AG04449 (cell line): ENCODE measurements at regions of chr20 and their contacts with region 1.

Region 1: GRCh38 chr20:63009045-63009961 is 2.5 kb upstream of the BHLHE23 start:
- DNase-seq: no peak
- H3K4me3 ChIP-seq: no peak overlapping the region
- CTCF ChIP-seq: peak; percentile 94

Region 2: GRCh38 chr20:62875419-62876361 is 133.6 kb before region 1 on chr20:
- CTCF ChIA-PET with region 1: interaction called, 27 read pairs
- POLR2A ChIA-PET with region 1: no interaction called
- DNase-seq: no peak
- H3K4me3 ChIP-seq: no peak overlapping the region
- CTCF ChIP-seq: peak; percentile 38

Region 3: DNA sequence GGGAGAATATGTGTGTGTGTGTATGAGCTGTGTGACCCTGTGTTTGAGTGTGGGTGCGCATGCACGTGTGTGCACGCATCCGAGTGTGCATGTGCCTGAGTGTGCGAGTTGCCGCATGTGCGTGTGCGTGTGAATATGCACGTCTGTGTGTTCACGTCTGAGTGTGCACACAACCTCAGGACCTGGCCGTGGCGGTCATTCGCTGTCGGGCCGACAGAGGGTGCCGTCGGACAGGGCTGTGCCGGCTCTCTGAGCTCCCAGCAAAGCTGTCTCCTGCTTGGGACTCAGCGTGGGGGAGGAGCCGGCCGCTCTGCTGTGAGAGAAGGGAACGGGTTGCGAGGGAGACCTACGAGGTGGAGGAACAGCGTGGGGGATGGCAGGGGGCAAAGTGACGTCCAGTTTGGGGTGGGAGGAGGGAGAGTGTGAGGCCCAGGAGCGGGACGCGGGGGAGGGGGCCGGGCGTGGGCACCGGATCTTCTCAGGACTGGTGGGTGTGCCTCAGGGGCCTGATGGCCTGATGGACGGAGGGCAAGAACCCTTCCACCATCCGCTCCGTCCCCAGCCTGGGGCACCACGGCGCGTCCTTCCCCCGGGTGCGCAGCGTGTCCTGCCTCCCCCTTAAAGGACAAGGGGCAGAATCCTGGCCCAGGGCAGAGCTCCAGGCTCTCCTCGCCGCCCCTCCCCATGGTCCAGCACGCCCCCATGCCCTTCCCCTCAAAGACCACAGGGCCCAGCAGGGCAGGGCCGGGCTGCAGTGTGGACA is 36.9 kb before region 1 on chr20:
- CTCF ChIA-PET with region 1: interaction called, 26 read pairs
- POLR2A ChIA-PET with region 1: interaction called, 3 read pairs
- DNase-seq: peak; percentile 3
- H3K4me3 ChIP-seq: peak overlapping the region; percentile 43
- CTCF ChIP-seq: peak; percentile 99

Region 4: DNA sequence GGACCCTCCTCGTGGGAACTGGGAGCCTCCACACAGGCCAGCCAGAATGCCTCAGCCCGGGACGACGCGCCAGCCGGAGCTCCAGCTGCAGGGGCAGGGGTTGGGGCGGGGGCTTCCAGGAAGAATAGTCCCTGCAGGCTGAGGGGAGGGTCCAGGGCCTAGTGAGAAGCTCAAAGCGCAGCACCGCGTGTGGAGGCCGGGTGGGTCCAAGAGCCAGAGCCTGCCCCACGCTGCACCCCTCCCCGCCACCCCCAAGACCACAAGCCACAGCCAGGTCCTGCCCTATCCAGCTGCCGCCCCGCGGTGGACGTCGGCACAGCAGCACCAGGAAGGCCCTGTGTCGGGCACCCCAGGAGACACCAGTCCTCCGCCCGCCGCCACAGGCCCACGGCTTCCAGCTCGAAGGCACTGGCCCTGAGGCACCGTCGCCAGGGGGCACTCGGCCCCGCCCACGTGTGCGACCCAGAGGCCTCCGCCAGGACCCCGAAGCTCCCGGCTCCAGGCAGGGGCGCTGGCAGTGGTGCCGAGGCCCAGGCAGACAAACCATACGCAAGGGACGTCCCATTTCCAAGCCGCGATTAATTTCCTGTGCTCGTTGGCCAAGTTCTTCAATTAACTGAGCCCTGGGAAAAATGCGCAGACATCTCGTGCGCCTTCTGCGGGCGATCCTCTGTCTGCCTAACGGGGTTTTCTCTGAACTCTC is 443.7 kb after region 1 on chr20:
- CTCF ChIA-PET with region 1: no interaction called
- POLR2A ChIA-PET with region 1: no interaction called
- DNase-seq: no peak
- H3K4me3 ChIP-seq: no peak overlapping the region
- CTCF ChIP-seq: peak; percentile 15